PC-9 (cell line): ENCODE measurements at regions of chr22 and their contacts with region 1.

Region 1: GRCh38 chr22:16917144-16918003 is 90.6 kb downstream of the GAB4 start:
- DNase-seq: peak in 1 of 2 experiments; percentile 37
- H3K4me3 ChIP-seq: no peak overlapping the region
- H3K27ac ChIP-seq: no peak overlapping the region
- H3K4me1 ChIP-seq: no peaks in the 10 kb centered on the region
- H3K27me3 ChIP-seq: peaks cover 5% of the 10 kb centered on the region
- CTCF ChIP-seq: peak; percentile 65

Region 2: GRCh38 chr22:16974298-16975084 is 57.1 kb after region 1 on chr22:
- CTCF ChIA-PET with region 1: no interaction called
- POLR2A ChIA-PET with region 1: no interaction called
- intact Hi-C with region 1: no loop called
- DNase-seq: no peak
- H3K4me3 ChIP-seq: no peak overlapping the region
- H3K27ac ChIP-seq: no peak overlapping the region
- H3K4me1 ChIP-seq: no peaks in the 10 kb centered on the region
- H3K27me3 ChIP-seq: peaks cover 11% of the 10 kb centered on the region
- CTCF ChIP-seq: no peak

Region 3: DNA sequence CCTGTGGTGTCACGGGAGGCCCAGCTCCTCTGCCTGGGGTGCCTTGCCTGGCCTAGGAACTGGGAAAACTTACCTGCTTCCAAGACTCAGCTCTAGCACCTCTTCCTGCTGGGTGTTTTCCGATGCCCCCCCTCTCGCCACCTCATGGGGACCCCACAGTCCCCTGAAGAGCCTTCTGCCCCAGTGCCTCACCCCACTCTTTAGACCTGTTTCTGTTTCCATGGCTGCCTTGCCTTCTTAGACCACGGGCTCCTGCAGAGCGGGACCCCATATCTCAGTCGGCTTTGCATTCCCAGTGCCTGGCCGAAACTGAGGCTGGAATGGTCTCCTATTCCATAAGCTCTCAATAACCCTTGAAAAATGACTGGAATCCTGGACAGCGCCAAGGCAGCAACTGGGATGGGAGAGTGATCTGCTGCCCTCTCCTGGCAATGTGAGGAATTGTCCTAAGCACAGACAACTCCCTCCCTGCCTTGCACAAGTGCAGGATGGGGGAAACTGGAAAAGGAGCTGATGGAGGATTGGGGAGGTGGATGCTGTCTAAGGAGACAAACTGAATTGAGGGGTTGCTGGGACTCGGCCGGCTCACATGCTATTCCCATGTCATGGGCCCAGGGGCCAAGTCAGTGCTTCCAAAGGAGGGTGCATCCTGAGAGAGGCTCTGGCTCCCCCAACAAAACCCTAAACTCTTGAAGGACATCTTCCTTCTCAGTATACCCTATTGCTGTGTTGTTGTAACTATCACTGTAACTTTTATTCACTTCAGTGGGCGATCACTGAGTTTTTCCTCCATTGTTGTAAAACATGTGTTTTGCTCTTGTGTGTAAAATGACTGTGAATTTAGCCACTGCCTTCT is 140.8 kb after region 1 on chr22:
- CTCF ChIA-PET with region 1: interaction called, 7 read pairs
- POLR2A ChIA-PET with region 1: no interaction called
- intact Hi-C with region 1: loop called (anchors 2 kb)
- DNase-seq: peak in 1 of 2 experiments; percentile 35
- H3K4me3 ChIP-seq: no peak overlapping the region
- H3K27ac ChIP-seq: no peak overlapping the region
- H3K4me1 ChIP-seq: no peaks in the 10 kb centered on the region
- H3K27me3 ChIP-seq: peaks cover 37% of the 10 kb centered on the region
- CTCF ChIP-seq: peak; percentile 85

Region 4: GRCh38 chr22:17501679-17502285 is 584.4 kb after region 1 on chr22:
- CTCF ChIA-PET with region 1: interaction called, 3 read pairs
- POLR2A ChIA-PET with region 1: no interaction called
- intact Hi-C with region 1: loop called (anchors 5 kb)
- DNase-seq: peak in 1 of 2 experiments; percentile 10
- H3K4me3 ChIP-seq: no peak overlapping the region
- H3K27ac ChIP-seq: no peak overlapping the region
- H3K4me1 ChIP-seq: no peaks in the 10 kb centered on the region
- H3K27me3 ChIP-seq: peaks cover 48% of the 10 kb centered on the region
- CTCF ChIP-seq: peak; percentile 75